H1 (cell line): ENCODE measurements at regions of chr18 and their contacts with region 1.

Region 1: DNA sequence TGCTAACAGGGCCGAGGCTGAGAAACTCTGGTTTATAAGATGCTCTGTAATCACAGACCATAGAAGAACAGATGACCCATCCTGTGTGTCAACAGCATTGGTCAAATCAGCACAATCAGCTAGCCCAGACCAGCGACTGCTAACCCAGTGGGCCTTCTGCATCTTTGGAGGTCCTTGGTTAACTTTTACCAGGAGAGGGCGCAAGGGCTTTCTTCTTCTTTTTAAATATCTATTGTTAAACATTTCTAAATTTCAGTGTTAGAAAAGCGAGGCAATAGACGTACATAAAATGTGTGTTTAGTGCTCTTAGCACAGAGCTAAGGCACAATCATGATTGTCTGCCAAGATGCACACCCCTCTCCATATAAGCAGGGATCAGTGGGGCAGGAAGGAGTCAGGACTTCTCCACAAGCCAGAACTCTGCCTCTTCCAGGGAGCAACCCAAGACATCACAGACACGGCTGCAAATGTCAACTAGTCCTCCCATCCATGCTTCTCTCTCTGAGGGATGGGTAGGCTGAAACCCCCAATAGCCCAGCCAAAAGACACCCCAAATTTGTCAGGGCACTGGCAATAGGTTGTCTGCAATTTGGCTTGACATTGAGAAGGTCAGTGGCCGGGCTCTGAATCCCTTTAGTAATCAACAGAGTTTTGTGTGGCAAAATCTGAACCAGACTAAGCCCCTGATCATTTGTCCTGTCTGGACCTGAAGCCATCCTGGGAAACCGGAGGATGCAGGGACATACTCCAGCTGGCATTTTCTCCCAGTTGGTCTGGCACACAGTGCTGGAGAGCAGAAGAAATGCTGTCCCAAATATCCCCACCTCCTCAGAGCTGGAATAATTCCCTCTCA is 188.2 kb downstream of the BCL2 start:
- DNase-seq: no peak
- H3K4me3 ChIP-seq: no peak overlapping the region
- H3K27ac ChIP-seq: no peak overlapping the region
- H3K4me1 ChIP-seq: peaks cover 0 to 3% (median 0%) of the 10 kb centered on the region in 4 experiments; a peak in 2 of 7 replicates
- H3K27me3 ChIP-seq: no peaks in the 10 kb centered on the region
- CTCF ChIP-seq: peak; percentile 29 to 71 (median 54)
- EP300 ChIP-seq: no peak
- POLR2A ChIP-seq: no peak
- RAD21 ChIP-seq: peak; percentile 57 to 62

Region 2: GRCh38 chr18:63025251-63026090 is 105.9 kb before region 1 on chr18:
- CTCF ChIA-PET with region 1: interaction called, 10 read pairs
- POLR2A ChIA-PET with region 1: no interaction called
- DNase-seq: no peak
- H3K4me3 ChIP-seq: no peak overlapping the region
- H3K27ac ChIP-seq: no peak overlapping the region
- H3K4me1 ChIP-seq: no peaks in the 10 kb centered on the region
- H3K27me3 ChIP-seq: peaks cover 0 to 9% (median 2%) of the 10 kb centered on the region in 4 experiments; a peak in 2 of 7 replicates
- CTCF ChIP-seq: peak; percentile 72 to 86 (median 83)
- EP300 ChIP-seq: no peak
- POLR2A ChIP-seq: no peak
- RAD21 ChIP-seq: peak; percentile 89 to 93

Region 3: GRCh38 chr18:63141778-63142176 is 10.4 kb after region 1 on chr18:
- CTCF ChIA-PET with region 1: interaction called, 48 read pairs
- POLR2A ChIA-PET with region 1: no interaction called
- DNase-seq: no peak
- H3K4me3 ChIP-seq: no peak overlapping the region
- H3K27ac ChIP-seq: no peak overlapping the region
- H3K4me1 ChIP-seq: peaks cover 0 to 20% (median 6%) of the 10 kb centered on the region in 4 experiments; a peak in 6 of 7 replicates
- H3K27me3 ChIP-seq: no peaks in the 10 kb centered on the region; a peak in 1 of 7 replicates
- CTCF ChIP-seq: no peak
- EP300 ChIP-seq: no peak
- POLR2A ChIP-seq: no peak
- RAD21 ChIP-seq: no peak

Region 4: GRCh38 chr18:63180971-63181376 is 49.6 kb after region 1 on chr18:
- CTCF ChIA-PET with region 1: interaction called, 11 read pairs
- POLR2A ChIA-PET with region 1: no interaction called
- DNase-seq: no peak
- H3K4me3 ChIP-seq: no peak overlapping the region
- H3K27ac ChIP-seq: no peak overlapping the region
- H3K4me1 ChIP-seq: peaks cover 0 to 8% (median 2%) of the 10 kb centered on the region in 4 experiments; a peak in 4 of 7 replicates
- H3K27me3 ChIP-seq: no peaks in the 10 kb centered on the region
- CTCF ChIP-seq: no peak
- EP300 ChIP-seq: no peak
- POLR2A ChIP-seq: no peak
- RAD21 ChIP-seq: no peak

Region 5: GRCh38 chr18:63329431-63330145 is 198.3 kb after region 1 on chr18:
- CTCF ChIA-PET with region 1: interaction called, 15 read pairs
- POLR2A ChIA-PET with region 1: no interaction called
- DNase-seq: no peak
- H3K4me3 ChIP-seq: no peak overlapping the region
- H3K27ac ChIP-seq: no peak overlapping the region
- H3K4me1 ChIP-seq: no peaks in the 10 kb centered on the region
- H3K27me3 ChIP-seq: no peaks in the 10 kb centered on the region
- CTCF ChIP-seq: no peak
- EP300 ChIP-seq: no peak
- POLR2A ChIP-seq: no peak
- RAD21 ChIP-seq: no peak